ENCODE measurements at regions of chr19 and their contacts with region 1.

Region 1: DNA sequence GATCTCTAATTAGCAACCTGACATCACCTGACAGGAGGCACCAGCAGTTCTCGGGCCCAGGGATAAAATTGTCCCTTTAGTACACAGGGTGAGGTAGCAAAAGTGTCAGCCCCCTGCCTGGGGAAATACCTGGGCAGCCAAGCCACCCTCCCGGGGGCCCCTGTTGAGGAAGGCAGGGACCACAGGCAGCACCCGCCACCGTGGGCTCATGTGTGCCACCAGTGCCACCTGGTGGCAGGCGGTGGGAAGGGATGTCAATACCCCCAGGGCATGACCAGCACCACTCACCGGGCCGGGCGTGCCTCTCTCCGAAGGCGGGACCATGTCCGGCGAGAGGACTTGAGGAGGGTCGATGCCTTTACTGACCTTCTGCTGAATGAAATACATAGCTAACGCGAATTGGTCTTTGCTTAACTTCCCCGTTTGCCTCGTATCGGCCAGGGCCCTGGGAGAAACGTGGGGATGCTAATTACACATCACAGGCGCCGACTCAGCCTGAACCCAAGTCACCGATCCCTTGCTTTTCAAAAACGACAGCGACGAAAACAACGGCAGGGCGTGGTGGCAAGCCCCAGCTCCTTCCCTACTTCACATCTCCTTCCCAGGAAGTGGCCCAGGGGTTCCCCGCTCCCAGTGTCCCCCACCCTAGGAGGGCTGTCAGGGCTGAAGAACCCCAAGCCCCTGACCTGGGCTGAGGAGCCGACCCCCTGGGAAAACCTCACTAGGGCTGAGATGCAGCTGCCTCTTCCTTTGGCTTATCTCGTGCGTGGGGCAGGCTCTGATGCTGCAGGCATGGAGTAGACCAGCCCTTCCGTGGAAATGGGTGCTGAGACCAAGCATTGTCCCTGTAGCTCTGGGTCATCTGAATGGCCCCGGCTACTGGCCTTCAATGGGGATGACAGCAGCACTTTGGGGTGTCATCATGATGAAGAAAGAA is 53.8 kb downstream of the EPS15L1 start:
- DNase-seq: peak; percentile 80
- ATAC-seq: peak; percentile 92
- H3K4me3 Mint-ChIP-seq: peak overlapping the region; percentile 61
- H3K27ac Mint-ChIP-seq: peak overlapping the region; percentile 83
- H3K4me1 Mint-ChIP-seq: peaks cover 37% of the 10 kb centered on the region
- H3K27me3 Mint-ChIP-seq: no peaks in the 10 kb centered on the region
- CTCF ChIP-seq: peak; percentile 87

Region 2: GRCh38 chr19:16041299-16041990 is 376.5 kb before region 1 on chr19:
- CTCF ChIA-PET with region 1: interaction called, 11 read pairs
- POLR2A ChIA-PET with region 1: no interaction called
- intact Hi-C with region 1: loop called (anchors 1 kb)
- DNase-seq: peak; percentile 75
- ATAC-seq: peak; percentile 90
- H3K4me3 Mint-ChIP-seq: peak overlapping the region; percentile 19
- H3K27ac Mint-ChIP-seq: no peak overlapping the region
- H3K4me1 Mint-ChIP-seq: peaks cover 6% of the 10 kb centered on the region
- H3K27me3 Mint-ChIP-seq: peaks cover 2% of the 10 kb centered on the region
- CTCF ChIP-seq: peak; percentile 40

Region 3: DNA sequence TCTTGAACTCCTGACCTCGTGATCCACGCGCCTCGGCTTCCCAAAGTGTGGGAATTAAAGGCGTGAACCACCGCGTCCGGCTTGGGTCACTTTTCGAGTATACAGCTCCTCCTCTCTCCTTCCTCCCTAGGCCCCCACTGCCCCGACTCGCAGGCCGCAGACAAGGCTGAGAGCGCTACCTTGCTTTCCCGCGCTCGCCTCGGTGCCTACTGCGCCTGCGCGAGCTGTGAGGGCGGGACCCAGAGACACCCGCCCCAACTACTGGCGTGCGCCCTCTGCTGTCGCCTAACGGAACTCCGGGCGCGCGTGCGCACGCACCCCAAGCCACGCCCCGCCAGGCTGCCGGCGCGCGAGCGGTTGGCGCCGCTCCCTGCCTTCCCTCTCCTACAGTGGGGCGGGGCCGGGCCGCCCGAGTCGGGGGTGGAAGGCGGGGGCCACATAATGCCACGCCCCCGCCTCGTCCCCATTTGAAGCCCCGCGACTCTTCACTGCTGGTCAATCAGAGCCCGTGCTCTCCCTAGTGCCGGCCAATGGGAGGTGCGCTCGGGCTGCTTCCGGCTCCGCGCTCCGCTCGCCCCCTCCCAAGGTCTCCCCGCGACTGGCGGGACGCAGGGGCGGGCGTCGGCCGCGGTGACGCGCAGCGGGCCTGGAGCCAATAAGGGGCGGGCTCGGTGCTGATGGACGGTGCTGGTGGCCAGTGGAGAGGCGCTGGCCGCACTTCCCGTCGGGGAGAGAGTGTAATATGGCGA is 306.6 kb before region 1 on chr19 and contains the start of gene RAB8A:
- CTCF ChIA-PET with region 1: no interaction called
- POLR2A ChIA-PET with region 1: no interaction called
- intact Hi-C with region 1: loop called (anchors 1 kb)
- DNase-seq: peak; percentile 100
- ATAC-seq: peak; percentile 90
- H3K4me3 Mint-ChIP-seq: peak within 1 kb of the TSS; percentile 99
- H3K27ac Mint-ChIP-seq: peak within 1 kb of the TSS; percentile 97
- H3K4me1 Mint-ChIP-seq: peaks cover 46% of the 10 kb centered on the region
- H3K27me3 Mint-ChIP-seq: no peaks in the 10 kb centered on the region
- CTCF ChIP-seq: peak; percentile 73
- total RNA-seq, gene RAB8A: 157 and 171 TPM in 2 replicates

Region 4: GRCh38 chr19:16272945-16273344 is 145.0 kb before region 1 on chr19:
- CTCF ChIA-PET with region 1: no interaction called
- POLR2A ChIA-PET with region 1: interaction called, 14 read pairs
- intact Hi-C with region 1: no loop called
- DNase-seq: no peak
- ATAC-seq: no peak
- H3K4me3 Mint-ChIP-seq: no peak overlapping the region
- H3K27ac Mint-ChIP-seq: no peak overlapping the region
- H3K4me1 Mint-ChIP-seq: peaks cover 14% of the 10 kb centered on the region
- H3K27me3 Mint-ChIP-seq: no peaks in the 10 kb centered on the region
- CTCF ChIP-seq: no peak

Region 5: GRCh38 chr19:16330368-16330801 is 87.5 kb before region 1 on chr19:
- CTCF ChIA-PET with region 1: interaction called, 21 read pairs
- POLR2A ChIA-PET with region 1: interaction called, 66 read pairs
- intact Hi-C with region 1: loop called (anchors 1 kb)
- DNase-seq: peak; percentile 70
- ATAC-seq: peak; percentile 77
- H3K4me3 Mint-ChIP-seq: peak overlapping the region; percentile 42
- H3K27ac Mint-ChIP-seq: peak overlapping the region; percentile 94
- H3K4me1 Mint-ChIP-seq: peaks cover 63% of the 10 kb centered on the region
- H3K27me3 Mint-ChIP-seq: no peaks in the 10 kb centered on the region
- CTCF ChIP-seq: no peak

Region 6: GRCh38 chr19:16382775-16383543 is 35.0 kb before region 1 on chr19:
- CTCF ChIA-PET with region 1: interaction called, 31 read pairs
- POLR2A ChIA-PET with region 1: interaction called, 11 read pairs
- intact Hi-C with region 1: loop called (anchors 1 kb)
- DNase-seq: peak; percentile 63
- ATAC-seq: peak; percentile 59
- H3K4me3 Mint-ChIP-seq: peak overlapping the region; percentile 57
- H3K27ac Mint-ChIP-seq: peak overlapping the region; percentile 94
- H3K4me1 Mint-ChIP-seq: peaks cover 82% of the 10 kb centered on the region
- H3K27me3 Mint-ChIP-seq: no peaks in the 10 kb centered on the region
- CTCF ChIP-seq: no peak

Measured in activated B cell treated with CpG ODN at 0.5 μM for 24 hours (primary cell).